Natural killer cell (primary cell): ENCODE measurements at regions of chr7 and their contacts with region 1.

Region 1: GRCh38 chr7:29345600-29345999 is 151.0 kb downstream of the CHN2 start:
- DNase-seq: peak; percentile 27 to 47
- ATAC-seq: peak; percentile 49 to 62 (median 55)
- H3K4me3 ChIP-seq: no peak overlapping the region
- H3K4me3 Mint-ChIP-seq: no peak overlapping the region
- H3K27ac ChIP-seq: no peak overlapping the region
- H3K27ac Mint-ChIP-seq: no peak overlapping the region
- H3K4me1 ChIP-seq: peaks cover 15% of the 10 kb centered on the region
- H3K4me1 Mint-ChIP-seq: peaks cover 0 to 7% of the 10 kb centered on the region in 2 donors
- H3K27me3 ChIP-seq: no peaks in the 10 kb centered on the region
- H3K27me3 Mint-ChIP-seq: no peaks in the 10 kb centered on the region
- CTCF ChIP-seq: no peak

Region 2: GRCh38 chr7:28926871-28927597 is 418.6 kb before region 1 on chr7:
- intact Hi-C with region 1: loop called (anchors 10 kb)
- DNase-seq: peak; percentile 22 to 82
- ATAC-seq: peak; percentile 91 to 94 (median 91)
- H3K4me3 ChIP-seq: peak overlapping the region; percentile 34
- H3K4me3 Mint-ChIP-seq: peak overlapping the region; percentile 88
- H3K27ac ChIP-seq: no peak overlapping the region
- H3K27ac Mint-ChIP-seq: peak overlapping the region in 1 of 2 donors; percentile 69
- H3K4me1 ChIP-seq: peaks cover 4% of the 10 kb centered on the region
- H3K4me1 Mint-ChIP-seq: peaks cover 20% of the 10 kb centered on the region in 2 donors
- H3K27me3 ChIP-seq: peaks cover 2% of the 10 kb centered on the region
- H3K27me3 Mint-ChIP-seq: peaks cover 7 to 20% of the 10 kb centered on the region in 2 donors
- CTCF ChIP-seq: peak; percentile 81